Panc1 (cell line): ENCODE measurements at regions of chr20 and their contacts with region 1.

Region 1: DNA sequence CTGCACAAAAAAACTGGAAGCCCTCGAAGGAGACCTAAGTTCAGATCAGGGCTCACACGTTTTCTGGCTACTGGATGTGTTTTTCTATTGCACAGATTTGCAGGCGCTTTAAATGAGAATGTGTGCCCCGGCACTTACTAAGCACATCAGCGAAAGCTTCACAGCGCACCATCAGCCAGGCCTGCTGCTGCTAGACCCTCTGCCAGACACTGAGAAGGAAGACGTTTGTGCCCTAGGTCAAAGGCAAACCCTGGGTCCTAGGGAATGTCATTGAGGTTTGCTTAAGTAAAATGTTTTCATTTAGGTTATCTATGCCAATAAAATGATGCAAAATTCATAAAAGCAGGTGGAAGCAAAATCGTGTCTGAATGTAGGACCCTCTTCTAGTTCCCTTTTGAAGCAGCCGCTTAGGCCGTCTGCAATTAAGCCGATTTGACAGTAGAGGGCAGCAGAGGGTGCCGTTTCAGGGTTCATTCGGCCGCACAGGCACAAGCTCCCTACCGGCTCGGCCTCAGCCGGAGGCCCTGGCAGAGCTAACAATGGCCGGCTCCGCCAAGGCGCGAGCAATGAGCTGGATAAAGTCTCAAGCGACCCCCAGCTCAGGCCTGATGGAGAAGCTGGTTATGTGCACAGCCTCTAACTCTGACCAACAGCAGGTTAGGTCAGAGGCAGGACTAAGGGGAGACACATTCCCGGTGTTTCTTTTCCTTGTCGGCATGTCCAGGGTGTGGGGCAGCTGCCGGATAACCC is 107.2 kb upstream of the FOXA2 start:
- DNase-seq: peak; percentile 38
- ATAC-seq: peak; percentile 98
- H3K4me3 ChIP-seq: peak overlapping the region in 1 of 2 experiments; percentile 37; a peak in 2 of 4 replicates
- H3K27ac ChIP-seq: no peak overlapping the region
- H3K4me1 ChIP-seq: no peaks in the 10 kb centered on the region
- H3K27me3 ChIP-seq: 0 out of 2 replicates have a peak, but pooled peaks cover 3% of the 10 kb centered on the region
- CTCF ChIP-seq: peak; percentile 92

Region 2: GRCh38 chr20:23058240-23058639 is 366.7 kb after region 1 on chr20:
- CTCF ChIA-PET with region 1: no interaction called
- POLR2A ChIA-PET with region 1: no interaction called
- in situ Hi-C with region 1: no loop called
- intact Hi-C with region 1: loop called (anchors 5 kb)
- DNase-seq: no peak
- ATAC-seq: no peak
- H3K4me3 ChIP-seq: no peak overlapping the region
- H3K27ac ChIP-seq: no peak overlapping the region
- H3K4me1 ChIP-seq: no peaks in the 10 kb centered on the region
- H3K27me3 ChIP-seq: peaks cover 14% of the 10 kb centered on the region
- CTCF ChIP-seq: peak; percentile 21; the same call in 1 of the 2 replicates

Region 3: DNA sequence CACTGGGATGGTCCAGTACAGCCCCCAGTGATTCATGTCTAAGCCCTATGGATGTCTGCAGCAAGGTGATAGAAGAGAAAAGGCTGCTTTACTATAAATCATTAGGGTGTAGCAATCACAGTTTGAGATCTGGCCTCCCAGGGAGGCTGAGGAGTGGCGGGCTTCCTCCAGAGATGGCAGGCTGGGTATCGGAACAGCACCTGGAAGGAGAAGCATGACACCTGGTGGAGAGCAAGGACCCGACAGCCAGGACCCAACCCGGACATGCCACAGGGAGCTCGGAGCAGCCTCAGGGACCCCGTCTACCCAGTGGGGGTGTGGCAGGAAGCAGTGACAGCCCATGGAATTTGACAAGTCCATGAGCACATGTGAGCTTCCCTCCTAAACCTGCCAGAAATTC is 509.4 kb after region 1 on chr20:
- CTCF ChIA-PET with region 1: interaction called, 17 read pairs
- POLR2A ChIA-PET with region 1: no interaction called
- in situ Hi-C with region 1: no loop called
- intact Hi-C with region 1: loop called (anchors 5 kb)
- DNase-seq: peak; percentile 8
- ATAC-seq: peak; percentile 79; the same call in 1 of the 2 replicates
- H3K4me3 ChIP-seq: no peak overlapping the region
- H3K27ac ChIP-seq: no peak overlapping the region
- H3K4me1 ChIP-seq: no peaks in the 10 kb centered on the region
- H3K27me3 ChIP-seq: peaks cover 6% of the 10 kb centered on the region
- CTCF ChIP-seq: peak; percentile 72

Region 4: GRCh38 chr20:23340524-23340923 is 649.0 kb after region 1 on chr20:
- CTCF ChIA-PET with region 1: interaction called, 20 read pairs
- POLR2A ChIA-PET with region 1: no interaction called
- in situ Hi-C with region 1: no loop called
- intact Hi-C with region 1: loop called (anchors 1 kb)
- DNase-seq: peak; percentile 43
- ATAC-seq: peak; percentile 94
- H3K4me3 ChIP-seq: no peak overlapping the region
- H3K27ac ChIP-seq: no peak overlapping the region
- H3K4me1 ChIP-seq: no peaks in the 10 kb centered on the region
- H3K27me3 ChIP-seq: no peaks in the 10 kb centered on the region
- CTCF ChIP-seq: peak; percentile 80